Endothelial cell of umbilical vein (primary cell): ENCODE measurements at regions of chr5 and their contacts with region 1.

Region 1: GRCh38 chr5:95730730-95731570 is at the start of gene RHOBTB3:
- DNase-seq: peak; percentile 88
- H3K4me3 ChIP-seq: peak within 1 kb of the TSS; percentile 35 to 95 (median 74)
- H3K27ac ChIP-seq: peak within 1 kb of the TSS; percentile 56
- H3K4me1 ChIP-seq: peaks cover 47% of the 10 kb centered on the region
- H3K27me3 ChIP-seq: no peaks in the 10 kb centered on the region
- CTCF ChIP-seq: peak in 1 of 2 donors; percentile 1
- POLR2A ChIP-seq: peak; percentile 39
- total RNA-seq, gene RHOBTB3: 37.6 and 44.1 TPM in 2 replicates

Region 2: DNA sequence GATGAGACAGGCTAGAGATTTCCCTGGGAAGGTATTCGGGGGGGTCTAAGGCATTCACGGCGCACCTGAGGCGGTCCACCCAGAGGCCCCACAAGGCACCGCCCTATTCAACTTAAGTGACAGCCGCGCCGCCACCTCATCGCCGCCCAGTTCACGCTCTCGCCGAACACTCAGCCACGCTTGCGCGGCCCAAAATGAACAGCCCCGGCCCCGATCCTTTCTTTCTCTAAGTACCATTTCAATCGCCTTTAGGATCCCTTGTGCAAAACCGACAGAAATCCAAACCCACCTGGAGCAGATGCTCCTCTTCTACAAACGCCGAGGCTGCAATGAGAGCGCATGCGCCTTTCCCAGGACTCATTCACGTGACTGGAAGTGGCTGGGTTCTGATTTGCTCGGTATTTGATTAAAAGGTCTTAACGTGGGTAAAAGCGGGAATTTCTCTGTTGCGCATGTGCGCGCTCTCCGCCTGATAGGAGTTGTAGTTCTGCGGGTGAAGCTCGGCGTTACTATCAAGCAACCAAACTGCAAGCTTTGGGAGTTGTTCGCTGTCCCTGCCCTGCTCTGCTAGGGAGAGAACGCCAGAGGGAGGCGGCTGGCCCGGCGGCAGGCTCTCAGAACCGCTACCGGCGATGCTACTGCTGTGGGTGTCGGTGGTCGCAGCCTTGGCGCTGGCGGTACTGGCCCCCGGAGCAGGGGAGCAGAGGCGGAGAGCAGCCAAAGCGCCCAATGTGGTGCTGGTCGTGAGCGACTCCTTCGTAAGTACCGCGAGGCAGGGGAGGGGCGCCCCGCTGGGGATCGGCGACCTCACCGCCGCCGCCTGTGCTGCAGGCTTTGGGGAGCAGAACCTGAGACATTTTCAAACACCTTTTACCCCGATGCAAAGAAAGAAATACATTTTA is 176.1 kb before region 1 on chr5 and contains the starts of genes ARSK and SKIC3:
- CTCF ChIA-PET with region 1: no interaction called
- POLR2A ChIA-PET with region 1: no interaction called
- dilution Hi-C with region 1: no loop called
- intact Hi-C with region 1: loop called (anchors 5 kb)
- DNase-seq: peak; percentile 99
- H3K4me3 ChIP-seq: peak within 1 kb of the TSS; percentile 57 to 90 (median 86)
- H3K27ac ChIP-seq: peak within 1 kb of the TSS; percentile 31
- H3K4me1 ChIP-seq: peaks cover 15% of the 10 kb centered on the region
- H3K27me3 ChIP-seq: no peaks in the 10 kb centered on the region
- CTCF ChIP-seq: peak; percentile 10 to 45
- POLR2A ChIP-seq: peak; percentile 64
- total RNA-seq, gene ARSK: 4.9 and 5.3 TPM in 2 replicates
- total RNA-seq, gene SKIC3: 92.6 and 100 TPM in 2 replicates

Region 3: GRCh38 chr5:95664204-95664786 is 66.7 kb before region 1 on chr5:
- CTCF ChIA-PET with region 1: interaction called, 18 read pairs
- POLR2A ChIA-PET with region 1: interaction called, 4 read pairs
- dilution Hi-C with region 1: no loop called
- intact Hi-C with region 1: loop called (anchors 1 kb)
- DNase-seq: peak; percentile 74
- H3K4me3 ChIP-seq: no peak overlapping the region
- H3K27ac ChIP-seq: no peak overlapping the region
- H3K4me1 ChIP-seq: peaks cover 15% of the 10 kb centered on the region
- H3K27me3 ChIP-seq: no peaks in the 10 kb centered on the region
- CTCF ChIP-seq: peak; percentile 54 to 60
- POLR2A ChIP-seq: no peak

Region 4: GRCh38 chr5:95715799-95716461 is 15.0 kb before region 1 on chr5:
- CTCF ChIA-PET with region 1: interaction called, 6 read pairs
- POLR2A ChIA-PET with region 1: interaction called, 3 read pairs
- dilution Hi-C with region 1: no loop called
- intact Hi-C with region 1: loop called (anchors 2 kb)
- DNase-seq: peak; percentile 81
- H3K4me3 ChIP-seq: no peak overlapping the region
- H3K27ac ChIP-seq: peak overlapping the region; percentile 80
- H3K4me1 ChIP-seq: peaks cover 31% of the 10 kb centered on the region
- H3K27me3 ChIP-seq: no peaks in the 10 kb centered on the region
- CTCF ChIP-seq: no peak
- POLR2A ChIP-seq: no peak

Region 5: GRCh38 chr5:95773335-95774059 is 42.5 kb after region 1 on chr5:
- CTCF ChIA-PET with region 1: interaction called, 11 read pairs
- POLR2A ChIA-PET with region 1: interaction called, 3 read pairs
- dilution Hi-C with region 1: no loop called
- intact Hi-C with region 1: no loop called
- DNase-seq: peak; percentile 33
- H3K4me3 ChIP-seq: no peak overlapping the region
- H3K27ac ChIP-seq: no peak overlapping the region
- H3K4me1 ChIP-seq: peaks cover 20% of the 10 kb centered on the region
- H3K27me3 ChIP-seq: no peaks in the 10 kb centered on the region
- CTCF ChIP-seq: no peak
- POLR2A ChIP-seq: no peak

Region 6: GRCh38 chr5:95835682-95836385 is 104.9 kb after region 1 on chr5:
- CTCF ChIA-PET with region 1: interaction called, 3 read pairs
- POLR2A ChIA-PET with region 1: no interaction called
- dilution Hi-C with region 1: no loop called
- intact Hi-C with region 1: loop called (anchors 5 kb)
- DNase-seq: peak; percentile 22
- H3K4me3 ChIP-seq: peak overlapping the region in 1 of 3 experiments; percentile 7
- H3K27ac ChIP-seq: no peak overlapping the region
- H3K4me1 ChIP-seq: peaks cover 21% of the 10 kb centered on the region
- H3K27me3 ChIP-seq: no peaks in the 10 kb centered on the region
- CTCF ChIP-seq: no peak
- POLR2A ChIP-seq: no peak